ENCODE measurements at regions of chr5 and their contacts with region 1.

Region 1: DNA sequence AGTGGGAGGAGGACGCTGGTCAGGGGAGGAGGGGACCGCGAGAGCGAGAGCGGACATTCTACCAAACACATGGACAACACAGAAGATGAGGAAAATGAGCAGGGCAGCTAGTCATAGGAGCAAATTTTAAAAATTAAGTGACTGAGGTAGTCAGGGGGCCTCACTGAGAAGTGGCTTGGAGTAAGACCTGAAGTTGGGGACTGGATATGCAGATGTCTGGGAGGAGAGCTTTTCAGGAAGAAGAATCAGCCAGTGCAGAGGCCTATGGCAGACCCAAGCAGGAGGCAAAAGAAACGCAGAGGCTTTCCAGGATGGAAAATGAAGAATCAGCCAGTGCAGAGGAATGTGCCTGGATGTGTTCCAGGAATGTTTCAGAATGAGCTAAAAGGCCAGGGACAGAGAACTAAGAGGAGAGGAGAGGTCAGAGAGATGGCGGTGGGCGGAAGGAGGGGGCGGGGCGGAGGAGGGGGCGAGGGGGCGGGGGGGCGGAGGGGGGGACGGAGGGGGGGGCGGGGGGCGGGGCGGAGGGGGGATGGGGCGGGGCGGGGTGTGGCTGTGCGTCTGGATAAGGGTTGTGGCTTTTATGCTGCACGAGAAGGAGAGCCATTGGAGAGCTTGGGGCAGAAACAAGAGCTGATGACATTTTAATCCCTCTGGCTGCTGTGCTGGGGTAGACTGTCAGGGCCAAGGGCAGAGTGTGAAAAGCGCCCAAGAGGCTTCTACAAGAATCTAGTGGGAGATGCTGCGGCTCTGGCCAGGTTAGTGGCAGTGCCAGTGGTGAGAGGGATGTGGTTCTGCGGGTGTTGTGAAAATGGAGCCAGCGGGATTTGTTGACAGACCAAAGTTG is 129.6 kb downstream of the KCNIP1 start:
- DNase-seq: peak; percentile 54 to 56
- H3K4me3 ChIP-seq: peak overlapping the region; percentile 24
- H3K4me3 Mint-ChIP-seq: peak overlapping the region; percentile 75
- H3K27ac Mint-ChIP-seq: peak overlapping the region; percentile 37
- H3K4me1 ChIP-seq: peaks cover 6% of the 10 kb centered on the region; the same call in 1 of the 2 replicates
- H3K4me1 Mint-ChIP-seq: peaks cover 26% of the 10 kb centered on the region
- H3K27me3 ChIP-seq: no peaks in the 10 kb centered on the region
- H3K27me3 Mint-ChIP-seq: peaks cover 15% of the 10 kb centered on the region
- CTCF ChIP-seq: no peak

Region 2: GRCh38 chr5:170225326-170226128 is 407.9 kb before region 1 on chr5:
- CTCF ChIA-PET with region 1: interaction called, 7 read pairs
- POLR2A ChIA-PET with region 1: no interaction called
- intact Hi-C with region 1: loop called (anchors 1 kb)
- DNase-seq: peak; percentile 59 to 69
- H3K4me3 ChIP-seq: no peak overlapping the region
- H3K4me3 Mint-ChIP-seq: no peak overlapping the region
- H3K27ac Mint-ChIP-seq: no peak overlapping the region
- H3K4me1 ChIP-seq: no peaks in the 10 kb centered on the region
- H3K4me1 Mint-ChIP-seq: no peaks in the 10 kb centered on the region
- H3K27me3 ChIP-seq: no peaks in the 10 kb centered on the region; the same call in 1 of the 2 replicates
- H3K27me3 Mint-ChIP-seq: peaks cover 8% of the 10 kb centered on the region
- CTCF ChIP-seq: peak; percentile 69 to 75

Region 3: GRCh38 chr5:170267431-170268152 is 365.9 kb before region 1 on chr5:
- CTCF ChIA-PET with region 1: no interaction called
- POLR2A ChIA-PET with region 1: no interaction called
- intact Hi-C with region 1: loop called (anchors 5 kb)
- DNase-seq: peak; percentile 60 to 66
- H3K4me3 ChIP-seq: no peak overlapping the region
- H3K4me3 Mint-ChIP-seq: no peak overlapping the region
- H3K27ac Mint-ChIP-seq: no peak overlapping the region
- H3K4me1 ChIP-seq: no peaks in the 10 kb centered on the region
- H3K4me1 Mint-ChIP-seq: no peaks in the 10 kb centered on the region
- H3K27me3 ChIP-seq: peaks cover 1% of the 10 kb centered on the region; the same call in 1 of the 2 replicates
- H3K27me3 Mint-ChIP-seq: peaks cover 35% of the 10 kb centered on the region
- CTCF ChIP-seq: peak; percentile 86 to 89

Region 4: DNA sequence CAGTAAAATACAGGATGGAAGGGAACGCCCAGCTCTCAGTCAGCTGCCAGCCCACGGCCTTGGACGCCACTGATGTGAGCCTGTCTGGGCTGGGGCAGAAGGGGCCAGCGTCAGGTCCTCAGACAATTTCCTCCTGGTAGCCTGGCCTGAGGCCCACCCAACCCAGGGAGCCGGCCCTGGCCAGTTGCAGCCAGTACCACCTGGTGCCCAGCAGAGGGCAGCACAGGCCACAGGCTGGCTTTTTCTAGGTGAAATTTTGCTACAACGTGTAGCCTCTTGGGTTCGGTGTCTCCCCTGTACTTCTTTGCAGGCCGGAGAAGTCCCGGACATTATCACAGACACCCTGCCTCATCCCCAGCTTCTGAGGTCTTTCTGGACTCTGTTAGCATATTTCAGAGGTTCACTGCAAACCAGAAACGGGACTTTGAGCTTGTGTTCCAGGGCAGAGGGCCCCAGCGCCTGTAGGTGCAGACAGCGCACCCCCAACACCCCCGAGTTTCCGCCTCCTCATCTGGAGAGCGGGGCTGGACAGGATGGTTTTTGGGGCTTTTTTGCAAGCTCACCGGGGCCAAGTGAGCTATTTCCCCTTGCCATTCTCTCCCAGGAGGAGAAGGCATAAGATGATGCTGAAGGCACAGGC is 198.4 kb before region 1 on chr5:
- CTCF ChIA-PET with region 1: interaction called, 17 read pairs
- POLR2A ChIA-PET with region 1: no interaction called
- intact Hi-C with region 1: loop called (anchors 1 kb)
- DNase-seq: peak in 1 of 2 experiments; percentile 73
- H3K4me3 ChIP-seq: no peak overlapping the region
- H3K4me3 Mint-ChIP-seq: no peak overlapping the region
- H3K27ac Mint-ChIP-seq: no peak overlapping the region
- H3K4me1 ChIP-seq: no peaks in the 10 kb centered on the region
- H3K4me1 Mint-ChIP-seq: no peaks in the 10 kb centered on the region
- H3K27me3 ChIP-seq: peaks cover 2% of the 10 kb centered on the region
- H3K27me3 Mint-ChIP-seq: peaks cover 13% of the 10 kb centered on the region
- CTCF ChIP-seq: peak; percentile 97

Region 5: DNA sequence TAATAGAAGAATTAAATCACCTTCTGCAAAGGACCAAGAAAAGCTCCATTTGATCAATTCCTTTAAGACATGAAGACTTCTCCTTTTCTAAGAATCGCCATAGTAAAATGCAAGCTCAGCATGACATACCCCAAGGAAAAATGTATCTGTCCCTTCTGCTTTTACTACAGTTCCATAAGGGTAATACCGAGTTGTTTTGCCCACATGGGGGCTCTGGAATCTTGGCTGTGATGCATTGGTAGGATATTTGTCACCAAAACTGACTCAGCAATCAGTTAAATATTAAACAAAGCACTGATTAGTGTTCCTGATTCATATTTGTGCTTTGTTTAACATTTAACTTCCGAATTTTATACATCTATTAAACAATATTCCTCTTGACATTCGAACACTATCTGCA is 154.0 kb before region 1 on chr5:
- CTCF ChIA-PET with region 1: no interaction called
- POLR2A ChIA-PET with region 1: no interaction called
- intact Hi-C with region 1: loop called (anchors 1 kb)
- DNase-seq: peak in 1 of 2 experiments; percentile 44
- H3K4me3 ChIP-seq: no peak overlapping the region
- H3K4me3 Mint-ChIP-seq: no peak overlapping the region
- H3K27ac Mint-ChIP-seq: no peak overlapping the region
- H3K4me1 ChIP-seq: peaks cover 6% of the 10 kb centered on the region
- H3K4me1 Mint-ChIP-seq: peaks cover 18% of the 10 kb centered on the region
- H3K27me3 ChIP-seq: no peaks in the 10 kb centered on the region
- H3K27me3 Mint-ChIP-seq: no peaks in the 10 kb centered on the region
- CTCF ChIP-seq: peak in 1 of 2 experiments; percentile 22

Region 6: GRCh38 chr5:170603578-170604565 is 29.6 kb before region 1 on chr5:
- CTCF ChIA-PET with region 1: interaction called, 3 read pairs
- POLR2A ChIA-PET with region 1: no interaction called
- intact Hi-C with region 1: loop called (anchors 1 kb)
- DNase-seq: peak; percentile 63 to 66
- H3K4me3 ChIP-seq: no peak overlapping the region
- H3K4me3 Mint-ChIP-seq: no peak overlapping the region
- H3K27ac Mint-ChIP-seq: no peak overlapping the region
- H3K4me1 ChIP-seq: no peaks in the 10 kb centered on the region
- H3K4me1 Mint-ChIP-seq: no peaks in the 10 kb centered on the region
- H3K27me3 ChIP-seq: 0 out of 2 replicates have a peak, but pooled peaks cover 1% of the 10 kb centered on the region
- H3K27me3 Mint-ChIP-seq: peaks cover 21% of the 10 kb centered on the region
- CTCF ChIP-seq: peak; percentile 66 to 76

Measured in Caco-2 (cell line).